ENCODE measurements at regions of chr5 and their contacts with region 1.

Region 1: DNA sequence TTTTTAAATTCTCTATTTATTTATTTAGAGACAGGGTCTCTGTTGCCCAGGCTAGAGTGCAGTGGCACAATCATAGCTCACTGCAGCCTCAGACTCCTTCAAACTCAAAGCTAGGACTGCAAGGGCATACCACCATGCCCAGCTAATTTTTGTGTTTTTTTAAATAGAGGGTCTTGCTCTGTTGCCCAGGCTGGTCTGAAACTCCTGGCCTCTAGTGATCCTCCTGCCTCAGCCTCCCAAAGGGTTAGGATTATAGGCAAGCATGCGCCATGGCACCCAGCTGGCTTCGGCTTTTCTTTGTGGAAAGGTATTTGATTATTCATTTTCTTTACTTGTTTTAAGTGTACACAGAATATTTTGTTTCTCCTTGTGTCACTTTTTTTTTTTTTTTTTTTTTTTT is 5.2 kb downstream of the ZNF346 start:
- DNase-seq: no peak
- ATAC-seq: no peak
- H3K4me3 Mint-ChIP-seq: no peak overlapping the region
- H3K27ac Mint-ChIP-seq: no peak overlapping the region
- H3K4me1 Mint-ChIP-seq: peaks cover 25% of the 10 kb centered on the region
- H3K27me3 Mint-ChIP-seq: no peaks in the 10 kb centered on the region
- CTCF ChIP-seq: no peak

Region 2: DNA sequence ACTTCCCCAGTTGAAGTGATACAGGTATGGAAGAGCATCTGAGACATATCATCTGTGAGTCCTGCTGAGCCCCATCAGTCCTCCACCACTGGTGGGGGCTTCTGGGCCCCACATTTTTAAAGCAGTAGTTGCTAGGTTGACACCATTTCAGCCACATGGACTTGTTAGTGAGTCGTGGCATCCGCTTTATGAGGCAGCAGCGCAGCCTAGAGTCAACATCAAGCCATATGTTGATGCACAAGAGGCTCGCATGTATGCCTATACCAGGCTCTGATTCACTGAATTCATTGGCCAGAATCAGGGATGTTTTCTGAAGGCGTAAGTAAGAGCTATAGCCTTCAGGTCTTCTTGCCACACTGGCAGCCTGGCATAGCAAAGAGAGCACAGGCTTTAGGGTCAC is 21.6 kb after region 1 on chr5:
- CTCF ChIA-PET with region 1: no interaction called
- POLR2A ChIA-PET with region 1: interaction called, 12 read pairs
- intact Hi-C with region 1: no loop called
- DNase-seq: no peak
- ATAC-seq: no peak
- H3K4me3 Mint-ChIP-seq: no peak overlapping the region
- H3K27ac Mint-ChIP-seq: no peak overlapping the region
- H3K4me1 Mint-ChIP-seq: no peaks in the 10 kb centered on the region
- H3K27me3 Mint-ChIP-seq: no peaks in the 10 kb centered on the region
- CTCF ChIP-seq: no peak

Region 3: GRCh38 chr5:177113566-177114424 is 86.1 kb after region 1 on chr5:
- CTCF ChIA-PET with region 1: no interaction called
- POLR2A ChIA-PET with region 1: no interaction called
- intact Hi-C with region 1: no loop called
- DNase-seq: peak; percentile 73
- ATAC-seq: peak; percentile 62
- H3K4me3 Mint-ChIP-seq: no peak overlapping the region
- H3K27ac Mint-ChIP-seq: no peak overlapping the region
- H3K4me1 Mint-ChIP-seq: peaks cover 20% of the 10 kb centered on the region
- H3K27me3 Mint-ChIP-seq: no peaks in the 10 kb centered on the region
- CTCF ChIP-seq: no peak

Region 4: DNA sequence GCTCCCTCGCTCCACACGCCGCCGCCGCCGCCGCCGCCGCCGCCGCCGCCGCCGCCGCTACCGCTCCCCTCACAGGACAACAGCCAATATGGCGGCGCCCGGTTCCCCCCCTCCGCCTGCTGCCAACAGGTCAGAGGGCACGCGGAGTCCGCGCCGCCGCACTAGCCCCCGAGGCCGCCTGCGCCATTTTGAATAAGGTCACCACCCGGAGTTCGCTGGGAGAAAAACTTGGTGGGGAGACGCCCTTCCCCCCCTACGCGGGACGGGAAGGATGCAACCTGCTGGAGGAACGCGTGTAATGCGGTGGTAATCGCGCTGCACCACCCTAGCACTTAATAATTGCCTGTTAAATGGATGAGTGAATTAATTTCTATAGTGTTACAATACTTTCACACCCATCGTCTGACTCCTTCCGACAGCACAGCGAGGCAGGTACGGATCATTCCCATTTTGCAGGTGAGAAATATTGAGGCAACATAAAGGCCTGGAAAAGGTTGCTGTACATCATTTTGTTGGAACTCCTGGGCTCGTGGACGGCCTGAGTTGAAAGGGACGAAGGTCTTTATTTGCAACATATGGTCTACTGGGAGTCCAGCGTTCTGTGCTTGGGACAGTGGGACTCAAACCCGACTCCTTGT is 526.9 kb after region 1 on chr5 and contains the start of gene FAM193B:
- CTCF ChIA-PET with region 1: no interaction called
- POLR2A ChIA-PET with region 1: no interaction called
- intact Hi-C with region 1: no loop called
- DNase-seq: peak; percentile 93
- ATAC-seq: peak; percentile 99
- H3K4me3 Mint-ChIP-seq: peak within 1 kb of the TSS; percentile 88
- H3K27ac Mint-ChIP-seq: peak within 1 kb of the TSS; percentile 77
- H3K4me1 Mint-ChIP-seq: peaks cover 29% of the 10 kb centered on the region
- H3K27me3 Mint-ChIP-seq: no peaks in the 10 kb centered on the region
- CTCF ChIP-seq: no peak
- total RNA-seq, gene FAM193B: 108 and 121 TPM in 2 replicates